Left lung (tissue), 14 donors: ENCODE measurements at regions of chr1 and their contacts with region 1.

Region 1: DNA sequence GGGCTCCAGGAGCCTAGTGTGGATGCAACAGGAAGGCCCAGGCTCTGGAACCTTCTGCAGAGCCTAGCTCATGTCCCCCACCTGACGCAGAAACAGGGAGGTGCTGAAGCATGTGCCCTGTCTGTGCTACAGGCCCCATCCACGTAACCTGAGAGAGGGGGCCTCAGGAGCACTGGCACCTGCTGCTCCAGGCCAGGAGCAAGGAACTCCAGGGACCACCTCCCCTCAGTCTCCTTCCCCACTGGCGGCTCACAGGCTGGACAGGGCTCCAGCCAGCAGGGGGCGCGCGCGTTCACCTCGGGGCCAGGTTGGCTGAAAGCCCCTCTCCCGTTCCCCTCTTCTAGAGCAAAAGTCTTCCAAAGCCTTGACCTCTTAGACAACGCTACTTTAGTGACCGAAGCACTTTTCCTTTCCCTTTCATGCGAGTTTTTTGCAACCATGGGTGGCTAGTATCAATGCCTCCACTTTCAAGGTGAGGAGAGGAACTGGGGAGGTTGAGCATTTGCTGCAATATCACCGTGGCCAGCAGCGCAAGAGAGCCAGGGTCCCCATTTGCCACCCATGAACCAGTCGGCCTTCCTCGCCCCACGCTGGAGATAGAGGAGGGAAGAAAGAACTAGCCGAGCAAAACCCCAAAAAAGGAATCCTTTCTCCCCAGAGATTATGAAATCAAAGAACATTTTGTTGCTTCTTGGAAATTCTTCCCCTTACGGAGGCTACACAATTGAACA is 52.4 kb upstream of the GPR157 start:
- DNase-seq: peak; percentile 53 to 96 (median 78)
- ATAC-seq: peak; percentile 83
- H3K4me3 ChIP-seq: peak overlapping the region; percentile 70 to 86
- H3K27ac ChIP-seq: peak overlapping the region; percentile 65 to 86
- H3K4me1 ChIP-seq: peaks cover 13 to 50% of the 10 kb centered on the region in 2 donors
- H3K27me3 ChIP-seq: peaks cover 0 to 30% of the 10 kb centered on the region in 2 donors
- CTCF ChIP-seq: peak; percentile 90 to 95

Region 2: DNA sequence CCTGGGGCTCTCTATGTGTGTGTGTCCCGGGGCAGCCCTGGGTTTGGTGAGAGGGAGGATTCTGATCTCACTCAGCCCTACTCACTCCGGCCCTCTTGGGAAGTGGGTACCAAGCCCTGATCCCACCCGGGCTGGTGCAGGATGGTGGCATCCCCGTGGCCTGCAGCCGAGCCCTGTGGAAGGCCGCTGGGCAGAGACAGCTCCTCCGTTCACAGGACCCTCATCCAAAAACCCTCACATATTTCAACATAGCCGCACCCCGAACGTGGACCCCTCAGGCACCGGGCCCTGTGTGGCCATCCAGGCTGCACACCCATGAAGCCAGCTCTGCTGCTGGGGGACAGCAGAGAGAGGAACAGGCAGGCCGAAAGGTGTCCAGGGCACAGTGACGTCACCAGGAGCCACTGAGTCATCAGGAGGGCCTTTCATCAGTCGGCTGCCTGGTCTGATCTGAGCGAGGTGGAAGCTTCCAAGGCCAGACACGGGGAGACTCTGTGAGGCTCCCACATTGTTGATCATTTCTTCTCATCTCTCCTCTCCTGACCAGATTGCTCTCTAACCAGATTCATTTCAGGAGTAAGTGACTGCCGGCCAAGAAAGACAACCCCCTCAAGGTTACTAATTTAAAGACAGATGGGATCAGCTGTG is 36.2 kb before region 1 on chr1:
- intact Hi-C with region 1: loop called in 1 of 2 experiments (anchors 5 kb)
- DNase-seq: peak in 2 of 4 donors; percentile 34 to 66
- ATAC-seq: no peak
- H3K4me3 ChIP-seq: no peak overlapping the region
- H3K27ac ChIP-seq: no peak overlapping the region
- H3K4me1 ChIP-seq: peaks cover 3 to 31% of the 10 kb centered on the region in 2 donors
- H3K27me3 ChIP-seq: no peaks in the 10 kb centered on the region
- CTCF ChIP-seq: no peak